ENCODE measurements at regions of chr10 and their contacts with region 1.

Region 1: GRCh38 chr10:103645141-103646054 is 151.9 kb downstream of the NEURL1 start:
- DNase-seq: peak; percentile 95
- H3K4me3 ChIP-seq: no peak overlapping the region
- H3K27me3 ChIP-seq: no peaks in the 10 kb centered on the region
- CTCF ChIP-seq: no peak

Region 2: DNA sequence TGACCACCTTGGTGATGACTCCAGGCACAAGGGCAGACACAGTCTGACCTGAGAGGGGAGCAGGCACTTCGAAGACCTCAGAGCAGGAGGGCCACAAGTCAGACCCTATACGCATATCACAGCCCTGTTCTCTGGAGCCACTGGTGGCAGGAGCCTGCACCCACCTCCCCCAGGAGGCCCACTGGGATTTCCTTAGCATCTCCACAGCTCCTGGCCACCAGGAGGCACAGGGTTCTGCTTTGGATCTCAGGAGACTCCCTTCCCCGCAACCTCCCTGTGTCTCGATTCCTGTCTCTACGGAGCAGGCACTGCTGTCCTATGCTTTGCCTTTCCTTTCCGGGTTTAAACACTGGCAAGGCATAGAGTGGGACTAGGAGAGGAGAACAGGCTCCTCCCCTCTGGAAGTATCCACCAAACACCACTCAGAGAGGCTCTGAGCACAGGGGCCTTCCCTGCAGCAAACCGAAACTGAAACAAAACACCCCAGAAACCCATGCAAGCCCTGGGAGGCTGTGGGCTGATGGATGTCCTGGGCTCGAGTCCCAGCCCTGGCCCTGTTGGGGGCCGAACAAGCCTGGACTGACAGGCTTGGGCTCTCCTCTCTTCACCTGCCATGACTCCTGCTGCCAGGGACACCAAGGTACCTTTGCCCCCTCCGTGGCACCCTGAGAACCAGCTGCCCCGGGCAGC is 14.4 kb after region 1 on chr10:
- CTCF ChIA-PET with region 1: interaction called, 10 read pairs
- POLR2A ChIA-PET with region 1: interaction called, 10 read pairs
- DNase-seq: peak; percentile 61
- H3K4me3 ChIP-seq: peak overlapping the region; percentile 81
- H3K27me3 ChIP-seq: no peaks in the 10 kb centered on the region
- CTCF ChIP-seq: peak; percentile 35

Region 3: DNA sequence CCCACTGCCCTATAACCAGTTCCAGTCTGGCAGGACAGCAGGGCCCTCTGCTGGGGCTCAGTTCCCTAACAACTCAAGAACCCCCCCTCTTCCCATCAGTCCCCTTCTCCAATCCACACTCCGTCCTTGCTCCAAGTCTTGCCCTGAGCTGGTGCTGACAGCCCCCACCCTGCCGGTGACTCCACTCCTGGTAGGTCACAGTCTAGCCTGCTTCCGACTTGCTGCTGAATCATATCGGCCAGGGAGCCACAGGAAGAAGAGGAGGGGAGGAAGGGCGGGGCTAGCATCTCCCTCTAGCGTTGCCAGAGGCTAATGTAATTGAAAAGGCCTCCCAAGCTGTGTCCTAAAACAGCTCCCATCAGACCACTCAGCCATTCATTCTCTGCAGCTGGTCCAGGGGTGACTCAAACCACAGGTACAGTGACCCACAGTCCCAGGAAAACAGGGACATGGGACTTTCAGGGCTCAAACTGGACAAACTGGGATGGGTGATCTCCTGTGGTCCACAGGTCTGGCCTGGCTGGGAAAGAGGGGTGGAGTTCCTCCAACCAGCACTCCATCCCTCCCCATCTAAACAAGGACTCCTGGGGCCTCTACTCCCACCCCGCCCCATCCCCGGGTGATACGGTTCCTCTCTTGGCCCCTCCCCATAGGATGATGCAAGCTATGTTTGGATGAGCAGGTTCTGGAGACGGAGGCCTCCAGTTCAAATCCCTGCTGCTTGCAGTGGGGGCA is 51.2 kb after region 1 on chr10:
- CTCF ChIA-PET with region 1: no interaction called
- POLR2A ChIA-PET with region 1: interaction called, 24 read pairs
- DNase-seq: peak; percentile 77
- H3K4me3 ChIP-seq: no peak overlapping the region
- H3K27me3 ChIP-seq: no peaks in the 10 kb centered on the region
- CTCF ChIP-seq: peak; percentile 71